CD8-positive, alpha-beta T cell (primary cell): ENCODE measurements at regions of chr19 and their contacts with region 1.

Region 1: GRCh38 chr19:36114763-36115452 is at the start of gene POLR2I:
- DNase-seq: peak; percentile 96 to 100 (median 99)
- ATAC-seq: peak; percentile 85
- H3K4me3 ChIP-seq: peak within 1 kb of the TSS; percentile 71 to 73
- H3K4me3 Mint-ChIP-seq: peak within 1 kb of the TSS; percentile 92
- H3K27ac ChIP-seq: peak within 1 kb of the TSS; percentile 77 to 92
- H3K27ac Mint-ChIP-seq: peak within 1 kb of the TSS; percentile 97
- H3K4me1 ChIP-seq: peaks cover 18% of the 10 kb centered on the region
- H3K4me1 Mint-ChIP-seq: peaks cover 39% of the 10 kb centered on the region
- H3K27me3 ChIP-seq: no peaks in the 10 kb centered on the region
- H3K27me3 Mint-ChIP-seq: no peaks in the 10 kb centered on the region
- CTCF ChIP-seq: no peak
- total RNA-seq, gene POLR2I: 27.4 to 34.7 TPM

Region 2: GRCh38 chr19:35247526-35248306 is 867.2 kb before region 1 on chr19:
- CTCF ChIA-PET with region 1: no interaction called
- POLR2A ChIA-PET with region 1: no interaction called
- intact Hi-C with region 1: no loop called
- DNase-seq: peak in 8 of 9 experiments; percentile 41 to 82 (median 65)
- ATAC-seq: peak; percentile 33
- H3K4me3 ChIP-seq: peak overlapping the region; percentile 65 to 96
- H3K4me3 Mint-ChIP-seq: peak overlapping the region; percentile 97
- H3K27ac ChIP-seq: peak overlapping the region; percentile 83 to 84
- H3K27ac Mint-ChIP-seq: peak overlapping the region; percentile 98
- H3K4me1 ChIP-seq: peaks cover 19% of the 10 kb centered on the region
- H3K4me1 Mint-ChIP-seq: peaks cover 39% of the 10 kb centered on the region
- H3K27me3 ChIP-seq: peaks cover 0 to 9% of the 10 kb centered on the region in 2 experiments
- H3K27me3 Mint-ChIP-seq: no peaks in the 10 kb centered on the region
- CTCF ChIP-seq: peak; percentile 43

Region 3: GRCh38 chr19:35702223-35703012 is 412.5 kb before region 1 on chr19:
- CTCF ChIA-PET with region 1: no interaction called
- POLR2A ChIA-PET with region 1: no interaction called
- intact Hi-C with region 1: loop called in 1 of 2 experiments (anchors 5 kb)
- DNase-seq: peak; percentile 79 to 98 (median 92)
- ATAC-seq: peak; percentile 99
- H3K4me3 ChIP-seq: peak overlapping the region; percentile 71 to 79
- H3K4me3 Mint-ChIP-seq: peak overlapping the region; percentile 92
- H3K27ac ChIP-seq: peak overlapping the region in 1 of 2 experiments; percentile 41
- H3K27ac Mint-ChIP-seq: peak overlapping the region; percentile 92
- H3K4me1 ChIP-seq: peaks cover 4% of the 10 kb centered on the region
- H3K4me1 Mint-ChIP-seq: peaks cover 7% of the 10 kb centered on the region
- H3K27me3 ChIP-seq: no peaks in the 10 kb centered on the region
- H3K27me3 Mint-ChIP-seq: no peaks in the 10 kb centered on the region
- CTCF ChIP-seq: no peak

Region 4: DNA sequence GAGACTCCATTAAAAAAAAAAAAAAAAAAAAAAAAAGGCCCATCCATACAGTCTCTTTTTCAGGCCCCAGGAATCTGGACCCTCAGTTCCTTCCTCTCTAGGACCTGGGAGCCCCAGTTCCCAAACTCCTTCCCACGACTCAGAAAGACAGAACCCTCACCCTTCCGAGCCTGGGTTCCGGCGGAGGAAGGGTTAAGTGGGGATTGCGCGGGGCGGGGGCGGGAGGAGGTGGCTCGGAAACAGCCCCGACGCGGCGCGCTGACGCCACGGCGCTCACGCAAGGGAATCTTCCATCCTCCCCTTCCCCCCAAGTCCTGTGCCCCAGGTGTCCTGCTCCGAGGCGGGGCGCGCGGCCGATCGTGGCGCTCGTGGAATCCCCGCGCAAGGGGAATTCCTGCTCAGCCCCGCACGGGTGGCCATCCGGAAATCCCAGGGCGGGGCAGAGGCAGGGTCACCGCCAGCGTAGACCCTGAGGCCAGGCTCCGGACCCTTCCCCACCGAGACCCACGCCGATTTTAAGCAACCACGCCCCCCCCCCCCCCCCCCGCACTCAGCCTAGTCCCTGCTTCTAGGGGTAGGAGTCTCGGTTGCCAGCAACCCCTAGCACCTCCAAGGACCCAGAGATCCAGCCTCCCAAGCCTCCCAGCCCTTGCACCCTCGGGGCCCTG is 215.2 kb before region 1 on chr19:
- CTCF ChIA-PET with region 1: no interaction called
- POLR2A ChIA-PET with region 1: no interaction called
- intact Hi-C with region 1: loop called in 1 of 2 experiments (anchors 1 kb)
- DNase-seq: peak; percentile 68 to 97 (median 87)
- ATAC-seq: peak; percentile 59
- H3K4me3 ChIP-seq: peak overlapping the region; percentile 95 to 97
- H3K4me3 Mint-ChIP-seq: peak overlapping the region; percentile 100
- H3K27ac ChIP-seq: peak overlapping the region; percentile 85 to 99
- H3K27ac Mint-ChIP-seq: peak overlapping the region; percentile 95
- H3K4me1 ChIP-seq: peaks cover 45% of the 10 kb centered on the region
- H3K4me1 Mint-ChIP-seq: peaks cover 57% of the 10 kb centered on the region
- H3K27me3 ChIP-seq: no peaks in the 10 kb centered on the region
- H3K27me3 Mint-ChIP-seq: no peaks in the 10 kb centered on the region
- CTCF ChIP-seq: no peak

Region 5: GRCh38 chr19:35995048-35995993 is 119.6 kb before region 1 on chr19 and contains the start of gene SDHAF1:
- CTCF ChIA-PET with region 1: no interaction called
- POLR2A ChIA-PET with region 1: interaction called, 3 read pairs
- intact Hi-C with region 1: loop called (anchors 1 kb)
- DNase-seq: peak; percentile 80 to 96 (median 92)
- ATAC-seq: peak; percentile 88
- H3K4me3 ChIP-seq: peak within 1 kb of the TSS; percentile 73 to 95
- H3K4me3 Mint-ChIP-seq: peak within 1 kb of the TSS; percentile 93
- H3K27ac ChIP-seq: peak within 1 kb of the TSS; percentile 55 to 69
- H3K27ac Mint-ChIP-seq: peak within 1 kb of the TSS; percentile 94
- H3K4me1 ChIP-seq: peaks cover 22% of the 10 kb centered on the region
- H3K4me1 Mint-ChIP-seq: peaks cover 35% of the 10 kb centered on the region
- H3K27me3 ChIP-seq: peaks cover 0 to 4% of the 10 kb centered on the region in 2 experiments
- H3K27me3 Mint-ChIP-seq: no peaks in the 10 kb centered on the region
- CTCF ChIP-seq: no peak
- total RNA-seq, gene SDHAF1: 7.3 TPM

Region 6: GRCh38 chr19:36054119-36054732 is 60.7 kb before region 1 on chr19 and contains the start of gene THAP8:
- CTCF ChIA-PET with region 1: no interaction called
- POLR2A ChIA-PET with region 1: interaction called, 10 read pairs
- intact Hi-C with region 1: loop called (anchors 1 kb)
- DNase-seq: peak; percentile 99 to 100 (median 100)
- ATAC-seq: peak; percentile 86
- H3K4me3 ChIP-seq: peak within 1 kb of the TSS; percentile 74 to 86
- H3K4me3 Mint-ChIP-seq: peak within 1 kb of the TSS; percentile 96
- H3K27ac ChIP-seq: peak within 1 kb of the TSS; percentile 95 to 96
- H3K27ac Mint-ChIP-seq: peak within 1 kb of the TSS; percentile 97
- H3K4me1 ChIP-seq: peaks cover 17% of the 10 kb centered on the region
- H3K4me1 Mint-ChIP-seq: peaks cover 27% of the 10 kb centered on the region
- H3K27me3 ChIP-seq: no peaks in the 10 kb centered on the region
- H3K27me3 Mint-ChIP-seq: no peaks in the 10 kb centered on the region
- CTCF ChIP-seq: peak; percentile 66
- total RNA-seq, gene THAP8: 0.31 to 0.57 TPM

Region 7: GRCh38 chr19:36139473-36140303 is 24.8 kb after region 1 on chr19 and contains the start of gene CAPNS1:
- CTCF ChIA-PET with region 1: interaction called, 3 read pairs
- POLR2A ChIA-PET with region 1: interaction called, 5 read pairs
- intact Hi-C with region 1: loop called (anchors 1 kb)
- DNase-seq: peak; percentile 77 to 96 (median 92)
- ATAC-seq: peak; percentile 55
- H3K4me3 ChIP-seq: peak within 1 kb of the TSS; percentile 90 to 99
- H3K4me3 Mint-ChIP-seq: peak within 1 kb of the TSS; percentile 96
- H3K27ac ChIP-seq: peak within 1 kb of the TSS; percentile 83 to 90
- H3K27ac Mint-ChIP-seq: peak within 1 kb of the TSS; percentile 93
- H3K4me1 ChIP-seq: peaks cover 13% of the 10 kb centered on the region
- H3K4me1 Mint-ChIP-seq: peaks cover 14% of the 10 kb centered on the region
- H3K27me3 ChIP-seq: no peaks in the 10 kb centered on the region
- H3K27me3 Mint-ChIP-seq: no peaks in the 10 kb centered on the region
- CTCF ChIP-seq: peak; percentile 26
- total RNA-seq, gene CAPNS1: 141 to 146 TPM

Region 8: DNA sequence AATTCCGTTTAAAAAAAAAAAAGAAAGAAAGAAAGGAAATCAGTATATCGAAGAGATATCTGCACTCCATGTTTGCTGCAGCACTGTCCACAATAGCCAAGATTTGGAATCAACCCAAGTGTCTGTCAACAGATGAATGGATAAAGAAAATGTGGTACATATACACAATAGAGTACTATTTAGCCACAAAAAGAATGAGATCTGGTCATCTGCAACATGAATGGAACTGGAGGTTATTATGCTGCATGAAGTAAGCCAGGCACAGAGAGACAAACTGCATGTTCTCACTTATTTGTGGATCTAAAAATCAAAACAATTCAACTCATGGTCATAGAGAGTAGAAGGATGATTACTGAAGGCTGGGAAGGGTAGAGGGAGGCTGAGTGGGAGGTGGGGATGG is 83.2 kb after region 1 on chr19:
- CTCF ChIA-PET with region 1: no interaction called
- POLR2A ChIA-PET with region 1: no interaction called
- intact Hi-C with region 1: no loop called
- DNase-seq: no peak
- ATAC-seq: no peak
- H3K4me3 ChIP-seq: no peak overlapping the region
- H3K4me3 Mint-ChIP-seq: no peak overlapping the region
- H3K27ac ChIP-seq: no peak overlapping the region
- H3K27ac Mint-ChIP-seq: no peak overlapping the region
- H3K4me1 ChIP-seq: no peaks in the 10 kb centered on the region
- H3K4me1 Mint-ChIP-seq: no peaks in the 10 kb centered on the region
- H3K27me3 ChIP-seq: no peaks in the 10 kb centered on the region
- H3K27me3 Mint-ChIP-seq: no peaks in the 10 kb centered on the region
- CTCF ChIP-seq: no peak